Cardiac septum (tissue), 1 donor: ENCODE measurements at regions of chr11 and their contacts with region 1.

Region 1: DNA sequence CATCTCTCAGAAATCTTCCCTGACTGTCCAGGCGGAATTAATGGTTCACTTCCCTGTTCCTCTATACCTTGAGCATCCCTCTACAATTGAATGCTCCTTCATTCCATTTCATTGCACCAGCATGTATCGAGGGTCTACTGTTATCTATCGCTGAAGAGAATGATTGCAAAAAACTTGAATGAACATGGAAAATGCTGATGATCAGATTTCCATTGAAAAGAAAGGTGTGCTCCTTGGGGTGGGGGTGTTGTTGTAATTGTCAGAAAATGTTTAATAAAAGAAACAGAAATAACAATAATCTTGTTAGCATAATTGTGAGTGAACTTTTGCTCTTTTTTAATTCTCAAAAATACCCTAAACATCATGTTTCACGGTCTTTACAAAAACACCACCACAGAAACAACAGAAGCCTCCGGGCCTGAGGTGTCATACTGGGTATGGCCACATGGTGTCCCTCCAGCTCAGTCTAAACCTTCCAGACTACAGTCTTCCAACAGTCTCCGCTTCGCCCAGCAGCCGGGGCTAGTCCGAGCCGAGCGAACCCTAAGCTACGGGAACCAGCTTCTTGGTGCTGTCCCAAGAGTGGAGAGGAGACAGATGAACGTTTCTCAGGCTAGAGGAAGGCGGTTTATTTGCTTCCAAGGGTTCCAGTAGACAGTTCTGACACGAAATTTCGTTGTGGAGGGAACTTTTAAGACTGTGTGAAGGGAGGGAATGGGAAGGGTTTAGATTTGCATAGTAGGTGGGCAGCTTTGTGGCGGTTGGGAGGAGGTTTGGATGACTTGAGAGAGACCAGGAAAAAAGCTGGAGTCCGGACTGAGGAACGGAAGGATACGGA is 75.8 kb upstream of the ZBED5 start:
- DNase-seq: peak; percentile 91

Region 2: DNA sequence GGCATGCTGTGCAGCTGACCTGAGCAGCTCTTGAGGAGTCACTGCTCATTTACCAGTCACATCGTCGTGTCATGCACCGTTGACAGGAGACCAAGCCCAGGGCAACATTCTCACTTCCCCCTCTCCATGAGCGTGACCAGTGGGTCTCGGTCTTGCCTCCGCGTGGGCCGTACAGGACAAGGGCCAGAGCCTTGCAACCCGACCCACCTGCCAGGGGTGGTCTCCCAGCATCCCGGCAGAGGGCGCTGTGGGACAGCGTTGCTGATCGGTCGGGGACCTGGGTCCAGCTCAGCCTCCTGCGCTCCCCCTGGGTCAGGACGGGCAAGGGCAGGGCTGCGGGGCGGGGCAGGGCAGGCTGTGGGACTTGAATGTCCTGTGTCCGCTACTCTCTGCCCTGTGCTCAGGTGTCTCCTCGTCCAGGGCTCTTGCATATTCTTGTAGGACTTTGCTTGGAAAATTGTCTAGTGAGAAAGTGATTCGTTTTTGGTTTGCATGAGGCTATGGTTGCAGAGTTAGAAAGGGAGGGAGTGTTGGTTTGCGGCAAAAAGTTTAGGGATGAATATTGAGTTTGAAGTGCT is 141.2 kb before region 1 on chr11:
- intact Hi-C with region 1: loop called (anchors 5 kb)
- DNase-seq: peak; percentile 94

Region 3: DNA sequence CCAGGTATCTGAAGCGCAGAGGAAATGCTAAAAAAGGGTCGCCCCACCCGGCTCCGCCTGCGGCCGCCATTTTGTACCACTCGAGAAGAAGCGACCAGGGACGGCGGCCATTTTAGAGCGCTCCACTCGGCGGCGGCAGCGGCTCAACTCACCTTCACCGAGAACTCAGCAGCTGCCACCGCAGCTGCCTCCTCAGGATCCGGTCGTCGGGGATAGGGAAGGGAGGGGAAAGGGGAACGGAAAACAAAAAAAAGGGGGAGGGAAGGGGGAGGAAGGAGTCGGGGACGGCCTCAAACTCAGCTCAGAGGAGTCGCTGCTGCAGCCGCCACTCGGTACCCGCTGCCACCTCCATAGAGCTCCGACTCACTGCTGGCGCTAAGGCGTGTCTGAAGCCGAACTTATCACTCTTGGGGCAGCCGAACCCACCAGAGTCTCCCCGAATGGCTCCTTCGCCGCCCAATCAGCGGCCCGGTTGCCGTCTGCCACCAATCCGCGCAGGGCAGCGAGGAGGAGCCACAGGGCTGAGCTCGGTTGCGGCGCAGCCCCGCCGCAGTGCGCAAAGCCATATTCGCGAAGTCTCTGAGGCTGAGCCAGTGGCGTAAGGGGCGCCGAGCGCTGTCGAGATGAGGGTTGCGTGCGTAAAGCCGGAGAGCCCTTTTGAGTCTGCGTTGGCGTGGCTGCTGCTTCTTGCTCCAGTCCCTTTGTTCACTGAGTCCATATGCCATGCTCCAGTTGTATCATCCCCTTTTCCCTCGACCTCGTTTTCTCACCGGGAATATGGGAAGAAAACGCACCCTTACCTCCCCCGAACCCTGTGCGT is 124.9 kb before region 1 on chr11 and contains the start of gene EIF4G2:
- intact Hi-C with region 1: loop called (anchors 2 kb)
- DNase-seq: peak; percentile 99
- total RNA-seq, gene EIF4G2: 765 TPM

Region 4: DNA sequence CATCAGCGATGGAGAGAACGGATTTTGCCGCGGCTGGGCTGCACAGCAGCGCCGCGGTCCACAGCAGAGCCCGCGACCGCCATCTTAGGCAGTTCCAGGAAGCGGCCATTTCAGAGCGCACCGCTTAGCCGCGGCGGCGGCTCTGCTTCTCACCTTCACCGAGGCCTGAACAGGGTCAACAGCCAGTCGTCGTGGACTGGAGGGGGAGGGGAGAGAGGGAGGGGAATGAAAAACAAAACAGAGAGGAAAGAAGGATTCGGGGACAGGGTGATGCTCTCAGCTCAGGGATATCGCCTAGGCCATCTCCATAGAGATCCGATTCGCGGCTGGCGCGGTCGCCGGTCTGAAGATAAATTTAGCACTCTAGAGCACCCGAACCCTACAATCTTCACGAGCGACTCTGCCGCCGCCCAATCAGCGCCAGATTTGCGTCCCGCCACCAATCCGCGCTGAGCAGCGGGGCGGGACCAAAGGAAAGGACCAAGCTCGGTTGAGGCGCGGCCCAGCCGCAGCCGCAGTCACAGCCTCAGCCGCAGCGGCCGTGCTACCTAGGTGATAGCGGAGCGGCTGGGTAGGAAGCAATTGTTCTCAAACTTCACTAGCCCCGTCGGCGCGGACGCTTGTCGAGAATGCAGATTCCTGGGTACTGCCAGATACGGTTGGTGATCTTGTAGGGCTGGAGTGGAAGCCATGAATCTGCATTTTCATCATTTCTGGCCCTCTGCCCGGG is 75.8 kb before region 1 on chr11 and contains the start of gene ZBED5:
- intact Hi-C with region 1: loop called (anchors 1 kb)
- DNase-seq: peak; percentile 99
- total RNA-seq, gene ZBED5: 38.8 TPM

Region 5: DNA sequence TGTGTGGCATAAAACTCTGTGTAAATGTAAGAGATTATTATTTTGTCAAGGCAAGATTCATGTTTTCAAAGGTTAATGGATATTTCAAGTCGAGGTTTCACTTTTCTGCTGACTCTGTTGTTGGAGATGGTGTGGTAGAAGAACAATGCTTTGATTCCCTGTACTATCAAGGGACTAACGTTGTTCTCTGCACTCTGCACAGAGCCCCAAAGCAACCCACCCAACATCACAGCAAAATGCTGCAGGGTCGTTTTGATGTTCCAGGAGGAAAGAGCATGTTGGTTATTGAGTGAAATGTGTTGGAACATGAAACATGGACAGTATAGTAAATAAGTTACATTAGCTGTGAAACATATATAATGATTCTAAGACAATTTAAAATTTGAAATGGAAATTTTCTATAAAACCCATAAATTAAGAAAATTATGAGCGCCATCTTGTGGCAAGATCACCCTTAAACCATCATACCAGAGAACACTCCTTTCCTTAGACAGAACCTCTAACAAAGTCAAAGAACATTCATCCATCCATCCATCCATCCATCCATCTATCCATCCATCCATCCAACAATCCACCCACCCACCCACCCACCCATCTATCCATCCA is 88.6 kb after region 1 on chr11:
- intact Hi-C with region 1: loop called (anchors 2 kb)
- DNase-seq: no peak

Region 6: GRCh38 chr11:11538277-11538960 is 604.7 kb after region 1 on chr11:
- intact Hi-C with region 1: loop called (anchors 10 kb)
- DNase-seq: peak; percentile 89

Region 7: GRCh38 chr11:11787305-11788062 is 853.8 kb after region 1 on chr11:
- intact Hi-C with region 1: loop called (anchors 5 kb)
- DNase-seq: no peak